Caco-2 (cell line): ENCODE measurements at regions of chr6 and their contacts with region 1.

Region 1: DNA sequence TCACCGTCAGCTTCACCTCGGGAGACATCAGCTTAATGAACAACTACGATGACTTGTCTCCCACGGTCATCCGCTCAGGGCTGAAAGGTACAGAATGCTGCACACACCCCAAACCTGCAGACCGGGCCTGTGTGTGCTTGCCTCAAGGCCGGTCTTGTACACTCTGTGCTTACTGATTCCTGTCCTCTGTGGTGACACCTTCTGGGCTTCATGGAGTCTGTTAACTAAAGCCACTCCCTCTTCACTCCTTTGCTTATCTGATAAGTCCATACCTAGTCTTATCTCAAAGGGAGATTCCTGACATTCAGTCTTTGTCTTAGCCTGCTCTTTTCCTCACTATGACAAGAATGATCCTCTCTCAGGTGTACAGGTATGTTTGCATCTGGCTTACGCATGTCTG is 107.7 kb upstream of the TMEM181 start:
- DNase-seq: peak; percentile 86 to 95
- H3K4me3 ChIP-seq: no peak overlapping the region
- H3K4me3 Mint-ChIP-seq: peak overlapping the region; percentile 56
- H3K27ac Mint-ChIP-seq: peak overlapping the region; percentile 65
- H3K4me1 ChIP-seq: peaks cover 40% of the 10 kb centered on the region
- H3K4me1 Mint-ChIP-seq: peaks cover 29% of the 10 kb centered on the region
- H3K27me3 ChIP-seq: no peaks in the 10 kb centered on the region; the same call in 1 of the 2 replicates
- H3K27me3 Mint-ChIP-seq: no peaks in the 10 kb centered on the region
- CTCF ChIP-seq: peak in 1 of 2 experiments; percentile 34

Region 2: GRCh38 chr6:158220786-158221442 is 231.3 kb before region 1 on chr6:
- CTCF ChIA-PET with region 1: no interaction called
- POLR2A ChIA-PET with region 1: no interaction called
- intact Hi-C with region 1: loop called (anchors 1 kb)
- DNase-seq: peak; percentile 80 to 87
- H3K4me3 ChIP-seq: no peak overlapping the region
- H3K4me3 Mint-ChIP-seq: no peak overlapping the region
- H3K27ac Mint-ChIP-seq: no peak overlapping the region
- H3K4me1 ChIP-seq: no peaks in the 10 kb centered on the region
- H3K4me1 Mint-ChIP-seq: no peaks in the 10 kb centered on the region
- H3K27me3 ChIP-seq: no peaks in the 10 kb centered on the region
- H3K27me3 Mint-ChIP-seq: no peaks in the 10 kb centered on the region
- CTCF ChIP-seq: peak; percentile 91 to 96

Region 3: GRCh38 chr6:158322724-158323560 is 129.2 kb before region 1 on chr6:
- CTCF ChIA-PET with region 1: no interaction called
- POLR2A ChIA-PET with region 1: no interaction called
- intact Hi-C with region 1: loop called (anchors 1 kb)
- DNase-seq: peak; percentile 72
- H3K4me3 ChIP-seq: no peak overlapping the region
- H3K4me3 Mint-ChIP-seq: peak overlapping the region; percentile 39
- H3K27ac Mint-ChIP-seq: peak overlapping the region; percentile 74
- H3K4me1 ChIP-seq: peaks cover 35% of the 10 kb centered on the region
- H3K4me1 Mint-ChIP-seq: peaks cover 50% of the 10 kb centered on the region
- H3K27me3 ChIP-seq: no peaks in the 10 kb centered on the region
- H3K27me3 Mint-ChIP-seq: no peaks in the 10 kb centered on the region
- CTCF ChIP-seq: no peak

Region 4: GRCh38 chr6:158408552-158409130 is 43.5 kb before region 1 on chr6:
- CTCF ChIA-PET with region 1: no interaction called
- POLR2A ChIA-PET with region 1: no interaction called
- intact Hi-C with region 1: loop called (anchors 5 kb)
- DNase-seq: no peak
- H3K4me3 ChIP-seq: no peak overlapping the region
- H3K4me3 Mint-ChIP-seq: no peak overlapping the region
- H3K27ac Mint-ChIP-seq: no peak overlapping the region
- H3K4me1 ChIP-seq: peaks cover 11% of the 10 kb centered on the region; the same call in 1 of the 2 replicates
- H3K4me1 Mint-ChIP-seq: peaks cover 24% of the 10 kb centered on the region
- H3K27me3 ChIP-seq: no peaks in the 10 kb centered on the region
- H3K27me3 Mint-ChIP-seq: no peaks in the 10 kb centered on the region
- CTCF ChIP-seq: no peak

Region 5: DNA sequence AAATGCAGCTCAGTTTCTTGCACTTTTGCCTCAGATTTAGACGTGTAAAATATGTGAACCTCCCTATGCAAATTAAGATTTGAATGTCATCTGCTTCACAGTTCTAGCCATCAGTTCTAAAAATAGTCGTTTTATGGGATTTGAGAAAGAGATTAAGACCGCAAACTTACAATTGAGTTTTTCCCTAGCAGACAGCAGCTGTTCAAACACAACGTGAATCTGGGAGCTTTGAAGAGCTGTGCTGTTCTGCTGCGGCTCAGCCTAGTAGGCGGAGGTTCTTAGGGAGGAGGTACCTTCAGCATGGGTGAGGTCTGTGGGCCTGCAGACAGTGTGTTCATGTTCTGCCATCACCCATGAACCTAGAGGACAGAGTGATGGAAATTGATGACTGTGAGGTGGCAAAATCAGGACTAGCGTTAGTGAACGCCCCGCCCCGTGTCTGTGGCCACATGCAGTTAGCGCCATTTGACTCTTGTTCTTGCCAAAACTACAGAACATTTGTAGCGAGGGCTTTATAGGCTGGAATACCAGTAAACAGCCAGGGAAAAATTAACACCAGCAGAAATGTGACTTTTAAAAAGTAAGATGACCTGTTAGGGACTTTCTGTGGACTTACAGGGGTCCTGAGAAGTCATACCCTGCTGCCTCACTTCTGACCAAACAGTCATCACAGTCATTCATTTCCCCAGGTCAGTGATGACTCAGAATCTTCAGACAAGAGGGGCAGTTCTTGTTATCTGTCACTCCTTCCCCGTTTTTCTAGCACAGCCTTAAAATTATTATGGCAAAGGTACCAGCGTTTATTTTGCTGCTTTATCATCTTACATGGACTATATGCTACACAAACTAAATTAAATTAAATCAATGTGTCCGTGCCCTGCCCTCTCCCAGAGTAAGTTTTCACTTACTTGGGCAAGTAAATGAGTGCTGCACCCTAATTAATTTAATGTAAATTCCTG is 23.4 kb after region 1 on chr6:
- CTCF ChIA-PET with region 1: no interaction called
- POLR2A ChIA-PET with region 1: no interaction called
- intact Hi-C with region 1: loop called (anchors 1 kb)
- DNase-seq: peak; percentile 81 to 87
- H3K4me3 ChIP-seq: no peak overlapping the region
- H3K4me3 Mint-ChIP-seq: peak overlapping the region; percentile 15
- H3K27ac Mint-ChIP-seq: peak overlapping the region; percentile 77
- H3K4me1 ChIP-seq: peaks cover 34% of the 10 kb centered on the region
- H3K4me1 Mint-ChIP-seq: peaks cover 41% of the 10 kb centered on the region
- H3K27me3 ChIP-seq: no peaks in the 10 kb centered on the region
- H3K27me3 Mint-ChIP-seq: no peaks in the 10 kb centered on the region
- CTCF ChIP-seq: no peak